CD4-positive, alpha-beta T cell (primary cell): ENCODE measurements at regions of chr7 and their contacts with region 1.

Region 1: GRCh38 chr7:149125863-149126661 is at the start of gene ZNF425:
- DNase-seq: peak; percentile 87 to 96 (median 93)
- ATAC-seq: peak; percentile 83
- H3K4me3 ChIP-seq: peak within 1 kb of the TSS; percentile 100
- H3K4me3 Mint-ChIP-seq: peak within 1 kb of the TSS; percentile 100
- H3K27ac ChIP-seq: peak within 1 kb of the TSS; percentile 79 to 80
- H3K27ac Mint-ChIP-seq: peak within 1 kb of the TSS; percentile 96
- H3K4me1 ChIP-seq: peaks cover 12% of the 10 kb centered on the region
- H3K4me1 Mint-ChIP-seq: peaks cover 24% of the 10 kb centered on the region
- H3K27me3 ChIP-seq: no peaks in the 10 kb centered on the region
- H3K27me3 Mint-ChIP-seq: no peaks in the 10 kb centered on the region
- CTCF ChIP-seq: peak; percentile 94
- total RNA-seq, gene ZNF425: 0.22 to 0.39 TPM

Region 2: GRCh38 chr7:149195180-149196150 is 69.4 kb after region 1 on chr7 and contains the start of gene ZNF282:
- CTCF ChIA-PET with region 1: no interaction called
- POLR2A ChIA-PET with region 1: interaction called, 12 read pairs
- intact Hi-C with region 1: no loop called
- DNase-seq: peak; percentile 32 to 83 (median 59)
- ATAC-seq: peak; percentile 79
- H3K4me3 ChIP-seq: peak within 1 kb of the TSS; percentile 90
- H3K4me3 Mint-ChIP-seq: peak within 1 kb of the TSS; percentile 96
- H3K27ac ChIP-seq: peak within 1 kb of the TSS; percentile 16 to 47
- H3K27ac Mint-ChIP-seq: peak within 1 kb of the TSS; percentile 89
- H3K4me1 ChIP-seq: peaks cover 25% of the 10 kb centered on the region
- H3K4me1 Mint-ChIP-seq: peaks cover 36% of the 10 kb centered on the region
- H3K27me3 ChIP-seq: no peaks in the 10 kb centered on the region
- H3K27me3 Mint-ChIP-seq: no peaks in the 10 kb centered on the region
- CTCF ChIP-seq: peak; percentile 54
- total RNA-seq, gene ZNF282: 13.3 to 15.6 TPM